ENCODE measurements at regions of chr15 and their contacts with region 1.

Region 1: DNA sequence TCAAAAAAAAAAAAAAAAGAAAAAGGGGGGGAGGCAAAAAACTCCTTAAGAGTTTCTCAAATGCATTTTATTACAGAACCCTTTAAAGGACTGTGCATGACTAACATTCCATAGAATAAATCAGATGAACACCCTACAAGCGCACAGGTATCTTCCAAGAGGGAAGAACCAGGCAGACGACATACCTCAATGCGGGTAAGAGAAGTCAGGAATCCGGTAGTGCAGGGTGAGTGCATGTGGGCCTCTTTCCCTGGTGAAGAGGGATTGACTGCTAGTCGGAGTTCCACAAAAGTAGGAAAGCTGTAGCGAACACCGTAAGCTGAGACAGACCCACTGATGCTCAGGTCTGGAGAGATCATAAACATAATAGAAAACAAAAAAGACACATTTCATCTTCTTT is 432.5 kb downstream of the GABRB3 start:
- DNase-seq: no peak
- ATAC-seq: no peak

Region 2: DNA sequence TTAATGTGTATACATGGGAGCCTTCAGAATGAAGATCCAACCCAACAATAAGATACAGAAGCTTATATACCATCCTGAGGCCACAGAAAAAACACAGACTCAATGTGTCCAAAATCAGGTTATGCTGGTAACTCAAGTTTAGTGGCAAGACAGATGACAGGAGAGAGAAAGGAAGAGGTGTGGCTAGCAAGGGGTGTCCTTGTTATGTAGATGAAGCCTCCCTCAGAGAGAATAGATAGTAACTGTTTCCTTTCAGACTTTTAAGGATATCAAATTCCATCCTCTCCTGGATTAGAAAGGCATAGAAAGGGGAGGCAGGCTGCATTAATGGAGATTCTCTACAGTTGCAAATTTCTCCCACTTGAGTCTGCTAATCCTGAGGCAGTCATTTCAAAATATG is 14.9 kb before region 1 on chr15:
- intact Hi-C with region 1: loop called (anchors 1 kb)
- DNase-seq: no peak
- ATAC-seq: no peak

Region 3: DNA sequence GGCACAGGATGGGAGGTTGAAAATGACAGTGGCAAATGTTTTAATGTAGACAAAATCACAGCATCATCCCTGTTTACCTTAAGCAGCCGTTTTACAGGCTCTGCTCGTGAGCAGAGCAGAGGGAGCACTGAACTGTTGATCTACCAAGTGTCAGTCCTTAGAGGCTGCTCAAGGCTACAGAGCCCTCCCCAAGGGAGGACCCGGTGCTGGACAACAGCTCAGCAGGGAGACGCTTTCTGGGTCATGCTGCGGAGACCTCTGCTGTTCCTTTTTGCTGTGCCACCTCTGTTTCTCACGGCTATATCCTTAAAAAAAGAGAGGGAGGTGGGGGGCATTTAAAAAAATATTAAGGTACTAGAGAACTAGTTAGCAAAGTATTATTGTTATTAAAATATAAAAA is 32.3 kb after region 1 on chr15:
- intact Hi-C with region 1: loop called (anchors 1 kb)
- DNase-seq: no peak
- ATAC-seq: no peak

Region 4: DNA sequence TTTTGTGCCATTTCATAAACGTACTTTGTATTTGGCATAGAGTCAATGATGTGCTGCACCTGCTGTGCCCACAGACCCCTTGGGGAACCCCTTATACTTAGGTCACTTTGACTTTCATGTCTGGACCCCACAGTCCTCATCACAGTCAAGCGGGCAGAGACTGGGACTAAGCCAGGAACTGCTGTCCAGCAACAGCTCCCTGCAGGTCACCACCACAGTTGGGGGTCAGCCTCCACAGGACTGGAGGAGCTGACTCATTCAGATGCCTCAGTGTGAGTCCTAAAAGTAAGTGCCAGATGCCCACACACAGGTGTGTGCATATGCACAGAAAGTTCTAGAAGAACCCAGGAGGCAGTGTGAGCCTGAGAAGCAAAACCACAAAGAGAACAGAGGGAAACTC is 92.7 kb after region 1 on chr15:
- intact Hi-C with region 1: no loop called
- DNase-seq: no peak
- ATAC-seq: no peak

Measured in sciatic nerve (tissue), 2 donors.